ENCODE measurements at regions of chr1 and their contacts with region 1.

Region 1: DNA sequence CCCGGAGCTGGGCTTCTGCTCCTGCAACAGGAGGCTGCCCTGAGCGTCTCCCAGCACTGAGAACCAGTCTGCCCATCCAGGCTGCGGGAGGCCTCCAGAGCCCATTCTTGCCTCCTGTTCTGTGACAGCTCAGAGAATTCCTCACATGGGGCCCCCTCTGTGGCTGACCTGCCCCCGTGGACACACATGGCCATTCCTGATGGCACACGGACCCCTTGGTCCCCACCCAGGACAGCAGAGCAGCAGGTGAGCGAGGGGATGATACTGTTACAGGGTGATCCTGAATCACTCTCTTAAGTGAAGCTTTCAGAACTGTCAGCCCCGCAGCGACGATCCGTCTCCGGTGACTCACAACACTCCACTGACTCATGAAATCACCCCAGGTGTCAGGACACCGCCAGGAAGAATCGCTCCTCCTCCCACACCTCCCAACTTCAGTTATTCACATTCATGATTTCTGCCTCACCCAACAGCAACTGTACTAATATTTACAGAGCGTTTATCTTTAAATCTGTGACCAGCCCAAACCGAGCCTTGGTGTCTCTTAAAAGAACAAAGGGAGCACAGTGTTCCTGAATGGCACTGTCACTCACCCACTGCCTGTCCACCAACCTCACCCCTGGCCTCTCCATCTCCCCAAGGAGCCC is 22.5 kb downstream of the CHD5 start:
- DNase-seq: peak; percentile 93
- ATAC-seq: peak; percentile 92
- H3K4me3 ChIP-seq: no peak overlapping the region
- H3K27ac ChIP-seq: peak overlapping the region; percentile 83
- H3K4me1 ChIP-seq: peaks cover 23% of the 10 kb centered on the region
- H3K27me3 ChIP-seq: no peaks in the 10 kb centered on the region
- CTCF ChIP-seq: no peak

Region 2: GRCh38 chr1:6185635-6186382 is 28.2 kb after region 1 on chr1:
- CTCF ChIA-PET with region 1: interaction called, 12 read pairs
- POLR2A ChIA-PET with region 1: no interaction called
- in situ Hi-C with region 1: no loop called
- intact Hi-C with region 1: no loop called
- DNase-seq: no peak
- ATAC-seq: no peak
- H3K4me3 ChIP-seq: no peak overlapping the region
- H3K27ac ChIP-seq: peak overlapping the region; percentile 32; the same call in 1 of the 2 replicates
- H3K4me1 ChIP-seq: peaks cover 51% of the 10 kb centered on the region
- H3K27me3 ChIP-seq: no peaks in the 10 kb centered on the region
- CTCF ChIP-seq: peak; percentile 85